CD4-positive, alpha-beta T cell (primary cell): ENCODE measurements at regions of chrX and their contacts with region 1.

Region 1: DNA sequence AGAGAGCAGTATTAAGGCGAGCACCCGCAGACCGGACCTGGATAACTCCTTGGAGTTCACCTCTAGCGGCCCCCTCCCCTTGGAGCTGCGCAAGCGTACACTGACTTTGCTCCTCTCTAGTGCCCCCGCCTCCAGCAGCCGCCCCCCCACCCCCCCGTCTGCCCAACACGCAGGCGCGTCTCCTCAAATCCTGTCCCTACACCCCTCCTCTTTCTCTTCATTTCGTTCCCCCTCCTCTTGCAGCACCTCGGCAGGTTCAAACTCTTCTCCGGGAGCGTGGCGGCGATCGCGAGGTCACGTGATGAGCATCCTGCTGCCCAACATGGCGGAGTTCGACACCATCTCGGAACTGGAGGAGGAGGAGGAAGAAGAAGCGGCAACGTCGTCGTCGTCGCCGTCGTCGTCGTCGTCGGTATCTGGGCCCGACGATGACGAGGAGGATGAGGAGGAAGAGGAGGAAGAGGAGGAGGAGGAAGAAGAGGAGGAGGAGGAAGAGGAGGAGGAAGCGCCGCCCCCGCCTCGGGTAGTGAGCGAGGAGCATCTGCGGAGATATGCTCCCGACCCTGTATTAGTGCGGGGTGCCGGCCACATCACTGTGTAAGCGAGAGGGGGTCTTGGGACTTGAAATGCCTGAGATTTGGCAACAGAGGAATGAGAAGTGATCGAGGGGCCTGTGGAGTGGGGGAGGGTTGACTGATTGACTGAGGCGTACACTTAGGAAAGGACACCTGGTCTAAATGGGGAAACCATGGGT is at the start of gene CHIC1:
- DNase-seq: peak; percentile 48 to 89 (median 64)
- ATAC-seq: peak; percentile 73
- H3K4me3 ChIP-seq: peak within 1 kb of the TSS; percentile 74
- H3K4me3 Mint-ChIP-seq: peak within 1 kb of the TSS; percentile 96
- H3K27ac ChIP-seq: peak within 1 kb of the TSS; percentile 78 to 94
- H3K27ac Mint-ChIP-seq: peak within 1 kb of the TSS; percentile 96
- H3K4me1 ChIP-seq: peaks cover 6% of the 10 kb centered on the region
- H3K4me1 Mint-ChIP-seq: peaks cover 31% of the 10 kb centered on the region
- H3K27me3 ChIP-seq: no peaks in the 10 kb centered on the region
- H3K27me3 Mint-ChIP-seq: no peaks in the 10 kb centered on the region
- CTCF ChIP-seq: no peak
- total RNA-seq, gene CHIC1: 7.0 to 7.2 TPM

Region 2: GRCh38 chrX:73214426-73215094 is 348.6 kb before region 1 on chrX and contains the start of gene NAP1L2:
- CTCF ChIA-PET with region 1: no interaction called
- POLR2A ChIA-PET with region 1: no interaction called
- intact Hi-C with region 1: loop called in 1 of 2 experiments (anchors 10 kb)
- DNase-seq: peak; percentile 2 to 81 (median 30)
- ATAC-seq: peak; percentile 88
- H3K4me3 ChIP-seq: peak within 1 kb of the TSS; percentile 70
- H3K4me3 Mint-ChIP-seq: peak within 1 kb of the TSS; percentile 93
- H3K27ac ChIP-seq: peak within 1 kb of the TSS in 1 of 2 donors; percentile 67
- H3K27ac Mint-ChIP-seq: peak within 1 kb of the TSS; percentile 92
- H3K4me1 ChIP-seq: no peaks in the 10 kb centered on the region
- H3K4me1 Mint-ChIP-seq: peaks cover 32% of the 10 kb centered on the region
- H3K27me3 ChIP-seq: no peaks in the 10 kb centered on the region
- H3K27me3 Mint-ChIP-seq: no peaks in the 10 kb centered on the region
- CTCF ChIP-seq: no peak
- total RNA-seq, gene NAP1L2: 4.2 to 4.8 TPM

Region 3: GRCh38 chrX:73850124-73851013 is 287.2 kb after region 1 on chrX:
- CTCF ChIA-PET with region 1: no interaction called
- POLR2A ChIA-PET with region 1: no interaction called
- intact Hi-C with region 1: no loop called
- DNase-seq: peak in 1 of 14 experiments; percentile 32
- ATAC-seq: no peak
- H3K4me3 ChIP-seq: no peak overlapping the region
- H3K4me3 Mint-ChIP-seq: no peak overlapping the region
- H3K27ac ChIP-seq: no peak overlapping the region
- H3K27ac Mint-ChIP-seq: no peak overlapping the region
- H3K4me1 ChIP-seq: no peaks in the 10 kb centered on the region
- H3K4me1 Mint-ChIP-seq: no peaks in the 10 kb centered on the region
- H3K27me3 ChIP-seq: no peaks in the 10 kb centered on the region
- H3K27me3 Mint-ChIP-seq: no peaks in the 10 kb centered on the region
- CTCF ChIP-seq: no peak